HEK293T (cell line): ENCODE measurements at regions of chr9 and their contacts with region 1.

Region 1: DNA sequence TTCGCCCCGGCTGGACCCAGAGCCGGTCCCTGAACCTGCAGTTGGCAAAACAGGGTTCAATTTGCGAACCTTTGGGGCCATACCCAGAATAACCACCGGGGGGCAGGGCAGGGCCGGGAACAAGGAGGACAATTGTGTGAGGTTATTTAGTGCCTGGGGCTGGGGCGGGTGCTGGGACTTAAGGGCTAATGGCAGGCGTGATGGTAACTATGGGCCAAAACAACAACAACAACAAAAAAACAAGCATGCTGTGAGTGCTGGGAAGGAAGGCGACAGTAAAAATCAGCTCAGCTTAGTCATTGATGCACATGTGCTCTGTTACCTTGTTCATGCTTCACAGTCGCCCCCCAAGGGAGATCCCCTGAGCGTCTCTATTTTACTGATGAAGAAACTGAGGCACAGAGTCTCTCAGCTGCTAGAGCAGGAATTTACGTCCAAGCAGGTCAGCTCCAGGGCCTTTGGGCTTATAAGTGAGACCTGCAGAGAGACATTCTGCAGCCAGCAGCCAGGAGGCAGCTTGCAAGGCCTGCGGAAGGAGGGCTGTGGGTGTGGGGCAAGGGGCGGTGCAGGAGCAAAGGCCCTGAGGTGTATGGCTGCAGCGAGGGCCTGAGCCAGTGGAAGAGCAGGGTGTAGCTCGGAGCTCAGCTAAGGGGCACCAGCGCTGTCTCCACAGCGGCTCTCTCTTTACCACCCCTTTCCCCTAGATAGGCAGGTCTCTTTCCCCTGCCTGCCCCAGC is 106.0 kb downstream of the PHF2 start:
- DNase-seq: peak; percentile 73

Region 2: GRCh38 chr9:93670208-93671019 is 12.0 kb before region 1 on chr9:
- CTCF ChIA-PET with region 1: no interaction called
- POLR2A ChIA-PET with region 1: no interaction called
- DNase-seq: no peak

Region 3: GRCh38 chr9:94002316-94003140 is 320.1 kb after region 1 on chr9:
- CTCF ChIA-PET with region 1: interaction called, 14 read pairs
- POLR2A ChIA-PET with region 1: no interaction called
- DNase-seq: peak; percentile 71